RWPE1 (cell line): ENCODE measurements at regions of chr3 and their contacts with region 1.

Region 1: GRCh38 chr3:193554811-193555210 is at the start of gene ATP13A4:
- DNase-seq: no peak
- H3K27ac ChIP-seq: no peak within 1 kb of the TSS
- CTCF ChIP-seq: no peak

Region 2: DNA sequence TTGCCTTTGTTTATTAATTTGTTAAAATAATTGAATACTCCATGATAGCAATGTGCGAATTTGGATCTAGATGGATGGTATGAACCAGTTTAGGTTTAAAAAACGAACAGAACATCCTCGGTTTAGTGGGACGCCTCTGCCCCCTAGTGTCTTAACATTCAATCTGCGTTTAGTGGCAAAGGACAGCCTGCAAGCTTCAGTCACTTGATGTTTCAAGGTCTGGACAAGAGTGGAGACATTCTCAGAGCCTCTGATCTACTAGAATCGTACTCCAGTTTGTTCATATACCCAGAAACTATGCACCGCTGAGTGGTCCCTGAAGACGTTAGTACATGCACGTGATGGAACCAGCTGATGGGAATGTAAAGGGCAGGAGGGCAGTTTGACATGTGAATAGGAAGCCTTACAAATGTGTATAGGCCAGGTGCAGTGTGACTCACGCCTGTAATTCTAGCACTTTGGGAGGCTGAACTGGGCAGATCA is 17.7 kb after region 1 on chr3:
- CTCF ChIA-PET with region 1: interaction called, 11 read pairs
- POLR2A ChIA-PET with region 1: no interaction called
- DNase-seq: peak; percentile 55
- H3K27ac ChIP-seq: no peak overlapping the region
- CTCF ChIP-seq: peak; percentile 79